PC-9 (cell line): ENCODE measurements at regions of chr22 and their contacts with region 1.

Region 1: GRCh38 chr22:42533638-42533977 is 14.0 kb upstream of the RRP7A start:
- DNase-seq: no peak
- H3K4me3 ChIP-seq: peak overlapping the region; percentile 57; the same call in 1 of the 2 replicates
- H3K27ac ChIP-seq: no peak overlapping the region
- H3K4me1 ChIP-seq: peaks cover 40% of the 10 kb centered on the region
- H3K27me3 ChIP-seq: no peaks in the 10 kb centered on the region
- CTCF ChIP-seq: no peak

Region 2: DNA sequence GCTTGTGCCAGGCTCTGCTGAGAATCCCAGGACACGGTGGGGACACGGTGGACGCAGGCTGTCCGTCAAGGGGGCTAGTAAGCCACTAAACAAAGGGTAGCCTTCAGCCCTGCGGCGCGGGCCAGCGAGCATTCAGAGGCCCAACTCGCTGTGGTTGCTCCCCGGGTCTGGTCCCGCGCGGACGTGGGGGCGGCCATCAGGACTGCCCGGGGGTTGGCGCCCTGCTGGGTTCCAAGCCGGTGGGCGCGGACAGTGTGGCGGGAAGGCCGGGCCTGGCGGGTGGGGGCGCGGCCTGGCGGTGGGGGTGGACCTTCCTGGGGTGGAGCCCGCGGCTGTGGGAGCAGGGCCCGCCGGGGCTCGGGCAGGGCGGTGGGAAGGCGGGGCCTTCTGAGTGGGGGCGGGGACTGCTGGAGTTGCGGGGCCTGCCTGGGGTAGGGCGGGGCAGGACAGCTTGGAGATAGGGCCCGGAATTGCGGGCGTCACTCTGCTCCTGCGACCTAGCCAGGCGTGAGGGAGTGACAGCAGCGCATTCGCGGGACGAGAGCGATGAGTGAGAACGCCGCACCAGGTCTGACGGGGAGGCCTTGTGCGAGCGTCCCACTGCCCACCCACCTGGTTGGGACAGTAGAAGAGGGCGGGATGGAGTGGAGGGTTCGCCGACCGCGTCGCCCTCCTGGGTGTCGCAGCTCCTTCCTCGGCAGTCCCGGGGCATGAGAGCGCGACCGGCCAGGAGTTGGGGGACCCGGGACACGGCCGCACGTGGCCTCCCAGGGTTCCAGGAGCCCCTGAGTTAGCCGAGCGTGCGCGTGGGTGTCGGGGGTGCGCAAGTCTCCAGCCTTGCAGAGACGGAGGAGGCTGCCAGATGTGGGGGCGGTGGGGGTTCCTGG is 20.1 kb after region 1 on chr22 and contains the start of gene SERHL2:
- CTCF ChIA-PET with region 1: no interaction called
- POLR2A ChIA-PET with region 1: no interaction called
- intact Hi-C with region 1: loop called (anchors 2 kb)
- DNase-seq: peak; percentile 36 to 88
- H3K4me3 ChIP-seq: peak within 1 kb of the TSS; percentile 44; the same call in 1 of the 2 replicates
- H3K27ac ChIP-seq: no peak within 1 kb of the TSS
- H3K4me1 ChIP-seq: no peaks in the 10 kb centered on the region
- H3K27me3 ChIP-seq: no peaks in the 10 kb centered on the region
- CTCF ChIP-seq: no peak
- total RNA-seq, gene SERHL2: 1.9 and 2.4 TPM in 2 replicates

Region 3: DNA sequence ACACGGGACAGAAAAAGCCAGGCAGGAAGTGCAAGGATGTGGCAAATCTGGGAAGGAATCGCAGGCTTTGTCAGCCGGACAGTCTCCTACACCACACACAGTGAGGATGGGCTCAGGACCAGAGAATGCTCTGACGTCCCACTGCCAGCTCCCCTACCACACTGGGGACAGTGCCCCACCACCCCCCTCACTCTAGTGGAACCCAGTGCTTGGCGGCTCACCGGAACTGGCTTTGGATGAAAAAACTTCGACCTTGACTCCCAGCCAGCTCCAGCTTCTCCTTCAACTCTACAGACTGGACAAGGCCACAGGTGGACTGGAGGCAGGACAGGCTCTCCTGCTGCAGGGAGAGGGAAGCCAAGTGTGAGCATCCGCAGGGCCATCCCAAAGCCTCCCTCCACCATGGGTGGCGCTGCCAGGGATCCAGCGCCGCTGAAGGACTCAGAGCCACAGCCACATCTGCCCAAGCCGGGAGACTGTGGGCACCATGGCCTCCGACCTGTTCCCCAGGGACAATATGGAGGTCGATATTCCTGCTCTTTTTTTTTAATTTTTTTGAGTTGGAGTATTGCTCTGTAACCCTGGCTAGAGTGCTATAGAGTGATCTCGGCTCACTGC is 44.1 kb after region 1 on chr22:
- CTCF ChIA-PET with region 1: no interaction called
- POLR2A ChIA-PET with region 1: no interaction called
- intact Hi-C with region 1: no loop called
- DNase-seq: no peak
- H3K4me3 ChIP-seq: no peak overlapping the region
- H3K27ac ChIP-seq: no peak overlapping the region
- H3K4me1 ChIP-seq: peaks cover 5% of the 10 kb centered on the region; the same call in 1 of the 2 replicates
- H3K27me3 ChIP-seq: no peaks in the 10 kb centered on the region
- CTCF ChIP-seq: no peak